ENCODE measurements at regions of chr9 and their contacts with region 1.

Region 1: DNA sequence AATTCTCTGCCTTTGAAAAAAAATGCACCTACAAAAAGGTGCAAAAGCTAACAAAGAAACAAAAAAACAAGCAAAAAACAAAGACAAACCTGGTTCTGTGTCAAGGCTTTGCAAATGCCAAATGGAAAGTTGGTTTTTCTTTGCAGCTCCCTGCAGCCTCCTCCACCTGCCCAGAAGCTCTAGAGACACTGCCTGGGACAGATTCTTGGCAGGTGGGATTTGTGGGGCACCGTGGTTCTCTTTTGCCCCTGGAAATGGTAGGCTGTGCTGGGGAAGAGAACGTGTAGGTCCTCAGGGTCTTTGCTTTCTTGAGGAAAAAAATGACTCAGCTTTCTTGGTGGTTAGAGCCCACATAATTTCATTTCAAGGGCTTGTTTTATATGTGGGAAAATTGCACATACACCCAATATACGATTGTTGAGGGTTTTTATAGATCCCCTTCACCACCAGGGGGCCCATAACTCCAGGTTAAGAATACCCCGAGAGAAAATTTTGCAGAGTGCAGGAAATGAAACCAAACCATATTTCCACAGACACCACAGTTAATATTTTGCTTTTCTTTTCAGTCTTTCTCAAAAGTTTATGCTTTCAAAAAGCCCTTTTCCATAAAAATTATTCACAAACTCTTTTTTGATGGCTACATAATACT is 58.7 kb downstream of the NXNL2 start:
- DNase-seq: peak in 1 of 2 donors; percentile 79
- ATAC-seq: peak in 7 of 8 donors; percentile 66 to 82 (median 75)
- H3K4me3 ChIP-seq: no peak overlapping the region
- H3K27ac ChIP-seq: no peak overlapping the region
- H3K4me1 ChIP-seq: no peaks in the 10 kb centered on the region
- H3K27me3 ChIP-seq: peaks cover 0 to 16% (median 0%) of the 10 kb centered on the region in 7 donors
- CTCF ChIP-seq: peak; percentile 45 to 84 (median 70)

Region 2: GRCh38 chr9:87749335-87750035 is 844.2 kb before region 1 on chr9:
- intact Hi-C with region 1: no loop called
- DNase-seq: no peak
- ATAC-seq: peak in 7 of 8 donors; percentile 16 to 93 (median 65)
- H3K4me3 ChIP-seq: no peak overlapping the region
- H3K27ac ChIP-seq: peak overlapping the region in 8 of 10 donors; percentile 4 to 70 (median 52)
- H3K4me1 ChIP-seq: peaks cover 0 to 15% (median 0%) of the 10 kb centered on the region in 9 donors
- H3K27me3 ChIP-seq: peaks cover 0 to 13% (median 0%) of the 10 kb centered on the region in 7 donors
- CTCF ChIP-seq: no peak

Region 3: DNA sequence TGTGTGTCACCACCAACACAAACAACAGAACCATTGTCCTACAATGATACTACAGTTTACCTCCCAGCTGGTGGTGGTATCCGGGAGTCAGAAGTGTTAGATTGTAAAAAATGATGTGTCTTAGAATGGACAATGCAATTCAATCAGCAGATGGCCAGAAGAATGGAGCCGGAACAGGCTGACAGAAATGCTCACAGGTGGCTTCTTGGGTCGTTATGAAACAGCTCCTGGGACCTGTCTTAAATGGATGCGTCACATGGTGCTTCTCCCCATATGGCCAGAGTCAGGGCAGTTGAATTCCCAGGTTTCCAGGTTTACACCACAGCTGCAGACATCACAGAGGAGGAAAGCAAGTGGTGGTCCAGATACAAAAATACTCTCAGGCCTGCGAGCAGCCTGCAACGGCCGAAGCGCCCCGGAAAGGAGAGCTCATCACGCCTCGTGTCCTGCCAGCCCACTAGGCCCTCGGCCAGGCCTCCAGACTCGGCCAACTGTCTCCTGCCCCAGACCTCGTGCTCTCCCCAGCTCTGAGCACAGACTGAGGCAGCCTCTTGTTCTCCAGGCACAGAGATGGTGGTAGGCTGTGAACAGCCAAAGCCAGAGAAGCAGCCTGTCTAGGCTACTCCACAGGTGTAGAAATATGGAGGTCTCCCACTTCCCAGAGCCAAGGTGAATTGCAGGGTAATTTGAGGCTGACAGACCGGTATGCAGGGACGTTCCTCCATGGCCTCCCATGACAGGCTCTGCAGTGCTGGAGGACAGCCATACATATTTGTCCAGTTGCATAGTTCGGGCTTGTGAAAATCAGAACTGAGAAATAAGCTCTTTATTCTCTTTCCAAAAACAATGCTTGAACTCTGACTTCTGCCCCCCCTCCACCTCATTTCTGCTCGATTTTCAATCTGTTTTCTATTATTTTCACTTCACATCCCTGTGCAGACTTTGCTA is 356.9 kb before region 1 on chr9:
- intact Hi-C with region 1: no loop called
- DNase-seq: peak; percentile 44 to 56
- ATAC-seq: peak; percentile 53 to 93 (median 82)
- H3K4me3 ChIP-seq: no peak overlapping the region
- H3K27ac ChIP-seq: no peak overlapping the region
- H3K4me1 ChIP-seq: peaks cover 0 to 12% (median 8%) of the 10 kb centered on the region in 9 donors
- H3K27me3 ChIP-seq: no peaks in the 10 kb centered on the region
- CTCF ChIP-seq: no peak

Region 4: GRCh38 chr9:88645172-88645878 is 51.7 kb after region 1 on chr9:
- intact Hi-C with region 1: no loop called
- DNase-seq: no peak
- ATAC-seq: peak in 1 of 8 donors; percentile 27
- H3K4me3 ChIP-seq: no peak overlapping the region
- H3K27ac ChIP-seq: peak overlapping the region in 2 of 10 donors; percentile 28 to 36
- H3K4me1 ChIP-seq: peaks cover 0 to 8% (median 0%) of the 10 kb centered on the region in 9 donors
- H3K27me3 ChIP-seq: peaks cover 0 to 2% (median 0%) of the 10 kb centered on the region in 7 donors
- CTCF ChIP-seq: no peak

Region 5: DNA sequence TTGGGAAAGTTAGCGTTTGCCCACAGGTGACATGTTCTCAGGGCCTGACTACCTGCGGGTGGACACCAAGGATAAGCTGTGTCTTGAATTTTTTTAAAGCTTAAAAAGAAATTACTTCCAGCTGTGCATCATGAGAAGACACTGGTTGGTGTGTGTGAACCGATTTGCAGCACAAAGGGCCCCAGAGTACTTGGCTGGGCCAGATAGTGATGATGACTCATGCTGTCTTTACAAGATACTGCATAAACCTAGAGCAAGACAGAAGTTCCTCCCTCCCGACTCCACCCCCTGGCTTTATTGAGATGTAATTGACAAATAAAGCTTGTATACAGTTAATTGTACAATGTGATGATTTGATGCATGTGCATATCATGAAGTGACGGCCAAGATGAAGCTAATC is 154.1 kb after region 1 on chr9:
- intact Hi-C with region 1: loop called in 2 of 10 experiments (anchors 10 kb)
- DNase-seq: no peak
- ATAC-seq: peak; percentile 49 to 78 (median 75)
- H3K4me3 ChIP-seq: no peak overlapping the region
- H3K27ac ChIP-seq: peak overlapping the region in 9 of 10 donors; percentile 10 to 81 (median 52)
- H3K4me1 ChIP-seq: peaks cover 0 to 53% (median 26%) of the 10 kb centered on the region in 9 donors
- H3K27me3 ChIP-seq: peaks cover 0 to 4% (median 0%) of the 10 kb centered on the region in 7 donors
- CTCF ChIP-seq: peak in 1 of 9 donors; percentile 6

Region 6: GRCh38 chr9:88874383-88874782 is 280.7 kb after region 1 on chr9:
- intact Hi-C with region 1: loop called in 1 of 10 experiments (anchors 10 kb)
- DNase-seq: no peak
- ATAC-seq: peak in 7 of 8 donors; percentile 20 to 61 (median 46)
- H3K4me3 ChIP-seq: no peak overlapping the region
- H3K27ac ChIP-seq: peak overlapping the region in 5 of 10 donors; percentile 40 to 73 (median 57)
- H3K4me1 ChIP-seq: peaks cover 5 to 35% (median 18%) of the 10 kb centered on the region in 9 donors
- H3K27me3 ChIP-seq: no peaks in the 10 kb centered on the region
- CTCF ChIP-seq: peak in 7 of 9 donors; percentile 18 to 48 (median 40)

Region 7: GRCh38 chr9:89278997-89279739 is 685.5 kb after region 1 on chr9:
- intact Hi-C with region 1: loop called in 5 of 10 experiments (anchors 5 to 10 kb)
- DNase-seq: peak in 1 of 2 donors; percentile 20
- ATAC-seq: no peak
- H3K4me3 ChIP-seq: no peak overlapping the region
- H3K27ac ChIP-seq: no peak overlapping the region
- H3K4me1 ChIP-seq: peaks cover 0 to 9% (median 0%) of the 10 kb centered on the region in 9 donors
- H3K27me3 ChIP-seq: no peaks in the 10 kb centered on the region
- CTCF ChIP-seq: peak; percentile 48 to 76 (median 64)

Measured in heart right ventricle (tissue), 16 donors.